ENCODE measurements at regions of chr19 and their contacts with region 1.

Region 1: GRCh38 chr19:38666663-38667511 is 19.4 kb downstream of the ACTN4 start:
- DNase-seq: no peak
- ATAC-seq: peak; percentile 34
- H3K4me3 ChIP-seq: peak overlapping the region in 1 of 2 experiments; percentile 12; a peak in 2 of 4 replicates
- H3K27ac ChIP-seq: peak overlapping the region; percentile 96
- H3K4me1 ChIP-seq: peaks cover 100% of the 10 kb centered on the region
- H3K27me3 ChIP-seq: no peaks in the 10 kb centered on the region
- CTCF ChIP-seq: no peak

Region 2: DNA sequence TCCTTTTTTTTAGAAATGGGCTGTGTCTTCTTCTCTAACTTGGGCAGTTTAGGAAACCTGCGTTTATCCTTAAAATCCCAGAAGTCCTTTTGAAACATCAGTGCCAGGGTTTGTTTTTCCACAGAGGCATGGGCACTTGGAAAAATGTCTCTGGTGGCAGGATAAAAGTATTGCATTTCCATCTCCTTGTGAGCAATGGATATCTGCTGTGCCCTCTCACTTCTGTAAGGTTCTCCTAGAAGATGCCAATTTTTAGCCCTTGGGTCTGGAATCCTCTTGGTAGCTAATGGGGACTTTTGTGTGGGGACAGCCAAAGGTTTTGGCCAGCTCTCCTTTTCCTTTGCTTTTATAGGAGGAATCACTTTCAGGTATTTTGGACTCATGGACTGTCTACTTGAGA is 781.5 kb before region 1 on chr19:
- CTCF ChIA-PET with region 1: no interaction called
- POLR2A ChIA-PET with region 1: no interaction called
- in situ Hi-C with region 1: no loop called
- intact Hi-C with region 1: no loop called
- DNase-seq: no peak
- ATAC-seq: no peak
- H3K4me3 ChIP-seq: no peak overlapping the region
- H3K27ac ChIP-seq: no peak overlapping the region
- H3K4me1 ChIP-seq: no peaks in the 10 kb centered on the region
- H3K27me3 ChIP-seq: peaks cover 24% of the 10 kb centered on the region; the same call in 1 of the 2 replicates
- CTCF ChIP-seq: no peak

Region 3: GRCh38 chr19:38062959-38063761 is 603.7 kb before region 1 on chr19:
- CTCF ChIA-PET with region 1: interaction called, 12 read pairs
- POLR2A ChIA-PET with region 1: no interaction called
- in situ Hi-C with region 1: no loop called
- intact Hi-C with region 1: no loop called
- DNase-seq: no peak
- ATAC-seq: peak; percentile 71
- H3K4me3 ChIP-seq: no peak overlapping the region
- H3K27ac ChIP-seq: peak overlapping the region; percentile 62
- H3K4me1 ChIP-seq: peaks cover 13% of the 10 kb centered on the region
- H3K27me3 ChIP-seq: no peaks in the 10 kb centered on the region
- CTCF ChIP-seq: no peak

Region 4: DNA sequence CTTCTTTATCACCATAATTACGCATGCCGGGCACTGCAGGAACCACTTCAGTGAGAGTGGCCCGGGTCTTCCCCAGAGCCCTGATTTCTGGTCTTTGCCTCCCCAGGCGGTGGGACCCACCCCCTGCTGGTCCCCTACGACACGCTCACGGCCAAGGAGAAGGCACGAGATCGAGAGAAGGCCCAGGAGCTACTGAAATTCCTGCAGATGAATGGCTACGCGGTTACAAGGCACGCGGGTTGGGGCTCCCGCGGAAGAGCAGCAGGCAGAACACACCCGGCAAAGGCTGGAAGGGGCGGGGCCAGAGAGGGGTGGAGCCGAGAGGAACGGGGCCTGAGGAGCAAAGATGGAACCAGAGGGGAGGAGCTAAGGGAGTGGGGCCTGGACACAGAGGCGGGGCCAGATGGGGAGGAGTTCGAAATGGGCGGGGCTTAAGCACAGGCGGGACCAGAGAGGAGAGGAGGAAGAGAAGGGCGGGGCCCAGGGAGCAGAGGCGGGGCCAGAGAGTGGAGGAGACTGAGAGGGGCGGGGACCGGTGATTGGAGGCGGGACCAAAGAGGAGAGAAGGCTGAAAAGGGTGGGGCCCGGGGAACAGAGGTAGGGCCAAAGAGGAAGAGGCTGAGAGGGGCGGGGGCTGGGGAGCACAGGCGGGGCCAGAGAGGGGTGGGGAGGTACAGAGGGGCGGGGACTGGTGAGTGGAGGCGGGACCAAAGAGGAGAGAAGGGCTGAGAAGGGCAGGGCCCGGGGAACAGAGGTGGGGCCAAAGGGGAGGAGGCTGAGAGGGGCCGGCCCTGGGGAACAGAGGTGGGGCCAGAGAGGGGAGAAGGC is 159.9 kb before region 1 on chr19:
- CTCF ChIA-PET with region 1: no interaction called
- POLR2A ChIA-PET with region 1: no interaction called
- in situ Hi-C with region 1: no loop called
- intact Hi-C with region 1: no loop called
- DNase-seq: peak; percentile 100
- ATAC-seq: peak; percentile 86
- H3K4me3 ChIP-seq: peak overlapping the region; percentile 29 to 64
- H3K27ac ChIP-seq: peak overlapping the region; percentile 58
- H3K4me1 ChIP-seq: peaks cover 8% of the 10 kb centered on the region
- H3K27me3 ChIP-seq: 0 out of 2 replicates have a peak, but pooled peaks cover 3% of the 10 kb centered on the region
- CTCF ChIP-seq: no peak

Region 5: GRCh38 chr19:38527466-38528136 is 139.3 kb before region 1 on chr19:
- CTCF ChIA-PET with region 1: no interaction called
- POLR2A ChIA-PET with region 1: interaction called, 17 read pairs
- in situ Hi-C with region 1: no loop called
- intact Hi-C with region 1: no loop called
- DNase-seq: no peak
- ATAC-seq: peak; percentile 20
- H3K4me3 ChIP-seq: peak overlapping the region in 1 of 2 experiments; percentile 32; a peak in 2 of 4 replicates
- H3K27ac ChIP-seq: no peak overlapping the region
- H3K4me1 ChIP-seq: peaks cover 4% of the 10 kb centered on the region; the same call in 1 of the 2 replicates
- H3K27me3 ChIP-seq: no peaks in the 10 kb centered on the region
- CTCF ChIP-seq: no peak

Region 6: GRCh38 chr19:38653028-38653571 is 13.8 kb before region 1 on chr19:
- CTCF ChIA-PET with region 1: no interaction called
- POLR2A ChIA-PET with region 1: interaction called, 23 read pairs
- in situ Hi-C with region 1: no loop called
- intact Hi-C with region 1: no loop called
- DNase-seq: no peak
- ATAC-seq: no peak
- H3K4me3 ChIP-seq: peak overlapping the region; percentile 50 to 68
- H3K27ac ChIP-seq: peak overlapping the region; percentile 96
- H3K4me1 ChIP-seq: peaks cover 73% of the 10 kb centered on the region
- H3K27me3 ChIP-seq: no peaks in the 10 kb centered on the region
- CTCF ChIP-seq: no peak

Region 7: DNA sequence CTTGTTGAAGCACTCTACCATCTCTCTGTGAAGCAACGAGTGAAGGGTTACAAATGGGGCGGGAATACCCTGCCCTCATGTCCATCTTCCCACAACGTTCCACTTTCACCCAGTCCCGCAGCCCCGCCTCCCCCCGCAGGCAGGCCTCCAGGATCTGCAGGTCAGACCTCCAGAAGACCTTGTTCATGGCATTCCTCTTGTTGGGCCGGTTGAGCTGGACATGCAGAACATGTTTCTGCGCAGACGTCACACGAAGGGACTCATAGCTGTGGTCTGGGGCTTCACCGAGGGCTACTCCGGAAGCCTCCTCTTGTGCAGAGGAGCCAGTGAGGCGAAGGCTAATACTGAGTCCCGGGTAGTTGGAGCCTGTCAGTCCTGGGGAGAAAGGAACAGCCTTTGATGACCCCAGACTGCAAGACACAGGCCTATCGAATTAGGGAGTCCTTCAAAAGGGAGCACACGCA is 164.3 kb after region 1 on chr19:
- CTCF ChIA-PET with region 1: no interaction called
- POLR2A ChIA-PET with region 1: no interaction called
- in situ Hi-C with region 1: no loop called
- intact Hi-C with region 1: no loop called
- DNase-seq: no peak
- ATAC-seq: peak; percentile 59
- H3K4me3 ChIP-seq: peak overlapping the region; percentile 51 to 78
- H3K27ac ChIP-seq: peak overlapping the region; percentile 97
- H3K4me1 ChIP-seq: peaks cover 55% of the 10 kb centered on the region
- H3K27me3 ChIP-seq: no peaks in the 10 kb centered on the region
- CTCF ChIP-seq: no peak

Region 8: DNA sequence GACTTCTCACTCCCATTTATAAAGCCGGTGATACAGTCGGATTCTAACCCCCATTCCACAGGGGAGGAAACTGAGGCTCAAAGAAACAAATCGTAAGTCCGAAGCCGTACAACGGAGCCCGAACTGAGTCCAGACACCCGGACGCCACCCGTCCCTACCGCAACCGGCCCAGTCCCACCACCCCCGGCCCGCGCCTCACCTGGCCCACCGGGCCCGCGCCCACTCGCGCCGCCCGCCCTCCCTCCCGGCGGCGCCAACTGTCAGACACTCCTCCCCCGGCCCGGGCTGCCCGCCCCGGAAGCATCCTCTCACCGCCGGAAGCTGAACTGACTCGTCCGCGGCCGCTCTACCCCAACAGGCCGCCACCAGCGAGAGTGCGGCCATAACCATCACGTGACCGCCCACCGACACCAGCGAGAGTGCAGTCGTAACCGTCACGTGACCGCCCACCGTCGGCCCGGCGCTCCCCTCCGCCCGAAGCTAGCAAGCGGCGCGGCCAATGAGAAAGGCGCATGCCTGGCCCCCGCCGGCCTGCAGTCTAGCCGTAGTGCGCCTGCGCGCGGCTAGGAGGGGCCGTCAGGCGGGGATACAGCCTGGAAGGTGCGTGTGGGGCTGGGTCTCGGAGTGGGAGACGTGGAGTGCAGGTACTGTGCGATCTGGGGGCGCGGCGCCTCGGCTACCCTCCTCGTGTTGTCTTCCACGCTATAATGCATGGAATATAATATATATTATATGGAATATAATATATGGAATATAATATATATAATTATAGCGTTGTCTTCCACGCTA is 1681.4 kb after region 1 on chr19 and contains the starts of genes C19orf47 and PLD3:
- CTCF ChIA-PET with region 1: no interaction called
- POLR2A ChIA-PET with region 1: no interaction called
- in situ Hi-C with region 1: loop called (anchors 25 kb)
- intact Hi-C with region 1: no loop called
- DNase-seq: peak; percentile 78
- ATAC-seq: peak; percentile 99
- H3K4me3 ChIP-seq: peak within 1 kb of the TSS; percentile 80 to 98
- H3K27ac ChIP-seq: peak within 1 kb of the TSS; percentile 85
- H3K4me1 ChIP-seq: peaks cover 3% of the 10 kb centered on the region; the same call in 1 of the 2 replicates
- H3K27me3 ChIP-seq: no peaks in the 10 kb centered on the region
- CTCF ChIP-seq: no peak
- total RNA-seq, gene C19orf47: 29.0 TPM
- total RNA-seq, gene PLD3: 81.8 TPM

Measured in Panc1 (cell line).